ENCODE measurements at regions of chr7 and their contacts with region 1.

Region 1: GRCh38 chr7:30433082-30433481 is 45.5 kb downstream of the NOD1 start:
- DNase-seq: peak in 1 of 2 donors; percentile 82
- H3K4me3 ChIP-seq: no peak overlapping the region
- H3K27ac ChIP-seq: peak overlapping the region; percentile 53 to 67
- H3K4me1 ChIP-seq: peaks cover 6 to 13% of the 10 kb centered on the region in 2 donors
- H3K27me3 ChIP-seq: no peaks in the 10 kb centered on the region
- CTCF ChIP-seq: no peak

Region 2: DNA sequence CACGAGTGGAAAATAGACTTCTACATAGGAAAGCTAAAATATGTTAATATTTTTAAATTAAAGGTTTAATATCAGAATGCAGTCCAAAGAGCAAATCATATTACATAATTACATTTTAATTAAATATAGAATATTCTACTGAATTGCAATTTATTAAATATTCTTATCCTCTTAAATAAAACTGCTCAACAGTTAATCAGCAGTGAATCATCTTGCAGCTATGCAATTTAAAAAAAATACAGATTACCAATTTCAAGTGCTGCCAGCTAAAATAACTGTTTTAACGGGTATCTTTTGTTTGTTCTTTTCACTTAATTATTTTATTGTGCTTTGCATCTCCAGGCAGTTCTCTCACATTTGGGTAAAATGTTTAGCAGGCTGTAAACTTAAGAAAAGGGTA is 66.5 kb before region 1 on chr7:
- intact Hi-C with region 1: no loop called
- DNase-seq: no peak
- H3K4me3 ChIP-seq: no peak overlapping the region
- H3K27ac ChIP-seq: no peak overlapping the region
- H3K4me1 ChIP-seq: peaks cover 0 to 3% of the 10 kb centered on the region in 2 donors
- H3K27me3 ChIP-seq: no peaks in the 10 kb centered on the region
- CTCF ChIP-seq: no peak

Region 3: GRCh38 chr7:30504347-30505173 is 71.5 kb after region 1 on chr7 and contains the start of gene GGCT:
- intact Hi-C with region 1: loop called (anchors 10 kb)
- DNase-seq: peak; percentile 99 to 100
- H3K4me3 ChIP-seq: peak within 1 kb of the TSS; percentile 88 to 95
- H3K27ac ChIP-seq: peak within 1 kb of the TSS; percentile 88 to 93
- H3K4me1 ChIP-seq: peaks cover 2 to 6% of the 10 kb centered on the region in 2 donors
- H3K27me3 ChIP-seq: no peaks in the 10 kb centered on the region
- CTCF ChIP-seq: no peak
- total RNA-seq, gene GGCT: 0.43 TPM